GM12878 (cell line): ENCODE measurements at regions of chr3 and their contacts with region 1.

Region 1: DNA sequence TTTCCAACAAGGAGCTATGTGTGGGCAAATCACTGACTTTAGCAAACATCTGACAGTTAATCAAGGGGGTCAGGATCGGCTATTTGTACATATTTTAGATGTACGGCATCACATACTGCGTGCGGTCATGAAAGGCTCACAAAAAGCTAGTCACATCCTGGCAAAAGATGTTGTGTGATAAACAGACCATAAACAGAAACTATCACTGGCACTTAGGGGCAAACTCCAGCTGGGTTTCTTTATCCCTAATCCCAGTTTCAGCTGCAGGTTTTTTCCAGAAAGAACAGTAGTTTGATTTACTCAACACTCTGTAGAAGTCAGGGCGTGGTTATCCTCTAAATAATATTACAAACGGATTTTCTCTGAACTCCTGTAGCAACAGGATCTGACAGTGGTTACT is 112.4 kb upstream of the BHLHE40 start:
- DNase-seq: no peak
- ATAC-seq: no peak
- H3K4me3 ChIP-seq: no peak overlapping the region
- H3K27ac ChIP-seq: no peak overlapping the region
- H3K4me1 ChIP-seq: peaks cover 10% of the 10 kb centered on the region
- H3K27me3 ChIP-seq: no peaks in the 10 kb centered on the region
- CTCF ChIP-seq: no peak
- EP300 ChIP-seq: no peak
- POLR2A ChIP-seq: no peak
- RAD21 ChIP-seq: no peak

Region 2: GRCh38 chr3:4880850-4881249 is 14.0 kb after region 1 on chr3:
- CTCF ChIA-PET with region 1: interaction called, 16 read pairs
- POLR2A ChIA-PET with region 1: interaction called, 4 read pairs
- RAD21 ChIA-PET with region 1: interaction called, 3 read pairs
- SMC1A ChIA-PET with region 1: interaction called, 6 read pairs
- in situ Hi-C with region 1: no loop called
- intact Hi-C with region 1: no loop called
- DNase-seq: no peak
- ATAC-seq: no peak
- H3K4me3 ChIP-seq: no peak overlapping the region
- H3K27ac ChIP-seq: no peak overlapping the region
- H3K4me1 ChIP-seq: no peaks in the 10 kb centered on the region
- H3K27me3 ChIP-seq: no peaks in the 10 kb centered on the region
- CTCF ChIP-seq: no peak
- EP300 ChIP-seq: no peak
- POLR2A ChIP-seq: no peak
- RAD21 ChIP-seq: no peak